ENCODE measurements at regions of chr20 and their contacts with region 1.

Region 1: DNA sequence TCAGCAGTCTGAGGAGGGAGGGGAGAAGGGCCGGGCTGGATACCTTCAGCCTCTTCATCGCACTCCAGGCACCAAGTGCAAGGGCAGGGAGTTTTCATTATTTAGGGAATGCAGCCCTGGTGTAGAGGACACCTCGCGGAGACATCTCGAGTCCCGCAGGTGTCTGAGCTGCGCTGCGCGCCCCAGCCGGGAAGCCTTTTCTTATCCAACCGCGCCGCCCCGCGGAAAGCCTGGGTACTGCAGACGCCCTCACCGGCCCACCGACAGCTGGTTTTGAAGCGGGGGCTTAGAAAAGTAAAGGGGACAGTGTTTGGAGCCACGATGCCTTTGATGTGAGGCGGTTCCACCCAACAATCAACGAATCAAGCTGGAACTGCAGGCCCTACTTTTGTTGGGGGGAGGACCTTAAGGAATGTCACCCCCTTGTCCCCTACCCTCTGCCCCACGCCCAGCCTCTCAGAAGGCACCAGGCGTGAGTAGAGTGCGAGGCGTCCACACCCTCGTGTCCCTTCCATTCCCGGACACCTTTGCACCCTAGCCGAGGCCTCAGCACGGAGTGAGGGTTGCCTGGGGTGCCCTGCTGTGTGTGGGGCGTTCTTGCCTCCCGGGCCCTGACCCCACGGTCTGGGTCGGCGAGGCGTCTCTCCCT is 8.6 kb downstream of the NKX2-2 start:
- DNase-seq: peak; percentile 87
- ATAC-seq: peak; percentile 80
- H3K4me3 ChIP-seq: no peak overlapping the region
- H3K27ac ChIP-seq: no peak overlapping the region
- H3K4me1 ChIP-seq: peaks cover 22% of the 10 kb centered on the region
- H3K27me3 ChIP-seq: peaks cover 85% of the 10 kb centered on the region
- CTCF ChIP-seq: peak; percentile 98

Region 2: GRCh38 chr20:20860078-20860806 is 645.0 kb before region 1 on chr20:
- intact Hi-C with region 1: loop called (anchors 10 kb)
- DNase-seq: peak; percentile 90
- ATAC-seq: peak; percentile 93
- H3K4me3 ChIP-seq: no peak overlapping the region
- H3K27ac ChIP-seq: no peak overlapping the region
- H3K4me1 ChIP-seq: no peaks in the 10 kb centered on the region
- H3K27me3 ChIP-seq: peaks cover 10% of the 10 kb centered on the region
- CTCF ChIP-seq: peak; percentile 96

Region 3: DNA sequence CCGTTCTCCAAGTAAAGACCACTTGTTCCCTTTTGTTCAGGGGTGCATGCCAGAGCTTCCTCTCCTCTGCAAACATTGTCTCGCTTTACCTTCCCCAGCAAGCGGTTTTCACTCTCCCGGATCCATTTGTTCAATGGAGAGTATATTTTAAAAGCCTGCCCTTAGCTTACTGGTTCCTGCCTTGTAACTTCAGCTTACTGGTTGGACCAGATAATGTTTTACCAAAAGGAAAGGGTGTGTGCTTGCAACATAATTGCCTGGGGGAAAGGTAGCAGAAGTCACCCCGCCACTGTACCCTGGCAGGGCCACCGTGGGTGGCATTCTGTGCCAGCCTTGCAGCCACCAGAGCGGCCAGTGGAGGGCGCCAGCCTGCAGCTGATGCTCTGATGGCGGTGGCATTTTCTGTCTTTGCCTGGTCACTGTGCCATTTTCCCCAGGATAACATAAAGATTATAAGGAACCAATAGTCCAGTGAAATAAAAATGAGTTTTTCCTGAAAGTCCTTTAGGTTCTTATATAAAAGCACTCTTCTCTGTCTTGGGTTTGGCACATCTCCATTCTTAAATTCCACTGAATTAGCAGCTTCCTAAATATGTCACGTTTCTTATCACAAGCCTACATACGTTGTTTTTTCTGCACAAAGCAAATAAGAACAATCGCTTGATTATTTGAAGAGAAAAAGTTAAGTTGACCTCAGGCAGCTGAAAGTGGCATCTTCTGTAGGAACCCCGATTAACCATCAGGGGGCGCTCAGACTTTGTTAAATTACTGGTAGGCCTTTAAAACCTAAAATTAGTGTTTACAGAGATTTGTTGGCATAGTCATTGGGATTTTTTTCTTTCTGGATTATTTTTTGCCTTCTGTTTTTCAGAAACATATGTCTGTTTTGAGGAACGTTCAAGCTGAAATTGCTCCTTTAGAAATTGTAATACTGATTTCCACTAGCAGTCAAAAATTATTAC is 269.5 kb before region 1 on chr20:
- intact Hi-C with region 1: loop called (anchors 5 kb)
- DNase-seq: peak; percentile 78
- ATAC-seq: peak; percentile 92
- H3K4me3 ChIP-seq: no peak overlapping the region
- H3K27ac ChIP-seq: no peak overlapping the region
- H3K4me1 ChIP-seq: peaks cover 7% of the 10 kb centered on the region
- H3K27me3 ChIP-seq: no peaks in the 10 kb centered on the region
- CTCF ChIP-seq: peak; percentile 72

Region 4: DNA sequence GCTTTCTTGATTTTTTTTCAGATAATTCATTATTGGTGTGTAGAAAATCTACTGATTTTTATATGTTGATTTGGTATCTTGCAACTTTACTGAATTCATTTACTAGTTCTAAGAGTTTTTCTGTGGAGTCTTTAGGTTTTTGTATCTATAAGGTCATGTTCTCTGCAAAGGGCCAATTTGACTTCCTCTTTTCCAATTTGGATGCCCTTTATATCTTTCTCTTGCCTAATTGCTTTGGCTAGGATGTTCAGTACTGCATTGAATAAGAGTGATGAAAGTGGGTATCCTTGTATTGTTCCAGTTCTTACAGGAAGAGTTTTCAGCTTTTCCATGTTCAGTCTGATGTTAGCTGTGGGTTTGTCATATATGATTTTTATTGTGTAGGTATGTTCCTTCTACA is 93.6 kb before region 1 on chr20:
- intact Hi-C with region 1: no loop called
- DNase-seq: no peak
- ATAC-seq: no peak
- H3K4me3 ChIP-seq: no peak overlapping the region
- H3K27ac ChIP-seq: no peak overlapping the region
- H3K4me1 ChIP-seq: no peaks in the 10 kb centered on the region
- H3K27me3 ChIP-seq: peaks cover 14% of the 10 kb centered on the region
- CTCF ChIP-seq: no peak